ENCODE measurements at regions of chr3 and their contacts with region 1.

Region 1: GRCh38 chr3:119637679-119638525 is 22.5 kb downstream of the POPDC2 start:
- DNase-seq: no peak
- ATAC-seq: peak; percentile 54
- H3K4me3 Mint-ChIP-seq: peak overlapping the region; percentile 78
- H3K27ac Mint-ChIP-seq: peak overlapping the region; percentile 98
- H3K4me1 Mint-ChIP-seq: peaks cover 44% of the 10 kb centered on the region
- H3K27me3 Mint-ChIP-seq: no peaks in the 10 kb centered on the region
- CTCF ChIP-seq: no peak

Region 2: DNA sequence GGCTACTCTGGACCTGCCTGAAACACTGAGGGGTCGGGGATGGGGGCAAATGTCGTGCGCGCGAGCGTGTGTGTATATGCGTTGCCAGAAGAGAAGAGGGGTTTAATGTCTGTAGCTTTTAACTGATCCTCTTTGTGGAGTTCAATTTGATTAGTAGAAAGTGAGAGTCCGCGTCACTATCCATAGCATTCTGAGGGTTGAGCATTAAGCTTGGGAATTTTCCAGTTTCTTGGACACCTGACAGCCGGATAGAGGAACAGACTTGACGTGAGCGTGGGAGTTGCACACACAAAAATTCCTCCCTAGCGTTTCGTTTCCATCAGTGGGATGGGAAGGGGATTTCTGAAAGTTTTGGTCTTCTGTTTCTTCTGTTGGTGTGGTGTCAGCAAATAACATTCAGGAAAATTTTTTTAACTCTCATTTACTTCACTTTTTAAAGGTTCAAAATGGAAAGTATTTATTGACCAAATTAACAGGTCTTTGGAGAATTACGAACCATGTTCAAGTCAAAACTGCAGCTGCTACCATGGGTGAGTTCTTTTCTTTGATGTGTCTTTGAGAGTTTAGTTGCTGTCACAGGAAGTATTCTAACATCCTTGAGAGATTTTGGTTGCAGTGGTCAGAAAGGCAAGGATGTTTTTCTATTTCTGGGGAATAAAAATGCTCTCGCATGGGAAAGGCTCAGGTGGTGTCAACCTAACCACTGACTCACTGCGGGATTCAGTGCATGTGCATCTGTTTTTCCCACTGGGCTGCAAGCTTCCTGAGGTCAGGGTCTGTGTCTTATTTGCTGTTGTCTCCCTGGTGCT is 168.3 kb before region 1 on chr3:
- CTCF ChIA-PET with region 1: no interaction called
- POLR2A ChIA-PET with region 1: no interaction called
- intact Hi-C with region 1: loop called (anchors 1 kb)
- DNase-seq: no peak
- ATAC-seq: peak; percentile 45
- H3K4me3 Mint-ChIP-seq: peak overlapping the region; percentile 93
- H3K27ac Mint-ChIP-seq: peak overlapping the region; percentile 90
- H3K4me1 Mint-ChIP-seq: peaks cover 32% of the 10 kb centered on the region
- H3K27me3 Mint-ChIP-seq: no peaks in the 10 kb centered on the region
- CTCF ChIP-seq: no peak

Region 3: GRCh38 chr3:119542168-119542767 is 95.6 kb before region 1 on chr3:
- CTCF ChIA-PET with region 1: no interaction called
- POLR2A ChIA-PET with region 1: interaction called, 15 read pairs
- intact Hi-C with region 1: no loop called
- DNase-seq: no peak
- ATAC-seq: no peak
- H3K4me3 Mint-ChIP-seq: peak overlapping the region; percentile 33
- H3K27ac Mint-ChIP-seq: peak overlapping the region; percentile 77
- H3K4me1 Mint-ChIP-seq: peaks cover 79% of the 10 kb centered on the region
- H3K27me3 Mint-ChIP-seq: no peaks in the 10 kb centered on the region
- CTCF ChIP-seq: no peak

Region 4: GRCh38 chr3:119579366-119580165 is 58.3 kb before region 1 on chr3 and contains the start of gene ADPRH:
- CTCF ChIA-PET with region 1: no interaction called
- POLR2A ChIA-PET with region 1: interaction called, 16 read pairs
- intact Hi-C with region 1: loop called (anchors 1 kb)
- DNase-seq: peak; percentile 76
- ATAC-seq: peak; percentile 76
- H3K4me3 Mint-ChIP-seq: peak within 1 kb of the TSS; percentile 97
- H3K27ac Mint-ChIP-seq: peak within 1 kb of the TSS; percentile 99
- H3K4me1 Mint-ChIP-seq: peaks cover 37% of the 10 kb centered on the region
- H3K27me3 Mint-ChIP-seq: no peaks in the 10 kb centered on the region
- CTCF ChIP-seq: no peak
- total RNA-seq, gene ADPRH: 41.2 and 43.8 TPM in 2 replicates

Region 5: DNA sequence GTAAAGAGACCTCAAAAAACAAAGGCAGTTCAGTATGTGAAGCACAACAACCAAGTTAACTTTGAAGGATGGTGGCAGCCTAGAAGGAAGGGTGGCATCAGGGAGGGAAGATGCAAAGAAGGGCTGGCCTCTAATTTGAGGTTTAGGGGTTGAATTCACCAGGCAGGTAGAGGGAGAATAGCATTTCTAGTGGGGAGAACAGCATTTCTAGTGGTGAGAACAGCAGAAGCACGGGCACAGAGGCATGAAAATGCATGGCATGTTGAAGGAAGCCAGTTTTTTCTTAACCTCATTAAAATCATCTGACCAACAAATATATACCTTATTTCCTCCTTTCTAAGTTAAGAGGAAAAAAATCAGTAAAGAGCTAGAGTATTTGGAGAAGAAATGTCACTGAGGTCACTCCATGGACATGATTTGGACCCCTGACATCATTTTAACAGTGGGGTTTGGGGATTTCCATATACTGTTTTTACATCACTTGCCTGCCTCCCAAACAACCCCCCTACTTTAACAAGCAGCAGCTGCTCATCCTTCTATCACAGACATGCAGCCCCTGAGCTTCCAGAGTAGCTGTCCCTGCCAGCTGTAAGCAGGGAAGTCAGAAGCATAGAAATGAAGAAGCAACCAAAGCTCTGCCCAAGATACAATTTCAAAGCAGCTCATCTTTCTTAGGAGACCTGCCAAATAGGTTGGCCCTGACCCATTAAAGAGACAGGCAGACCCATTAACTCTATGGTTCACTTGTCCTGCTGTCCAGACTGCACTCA is 24.9 kb after region 1 on chr3:
- CTCF ChIA-PET with region 1: no interaction called
- POLR2A ChIA-PET with region 1: interaction called, 6 read pairs
- intact Hi-C with region 1: loop called (anchors 1 kb)
- DNase-seq: no peak
- ATAC-seq: no peak
- H3K4me3 Mint-ChIP-seq: no peak overlapping the region
- H3K27ac Mint-ChIP-seq: peak overlapping the region; percentile 67
- H3K4me1 Mint-ChIP-seq: peaks cover 68% of the 10 kb centered on the region
- H3K27me3 Mint-ChIP-seq: no peaks in the 10 kb centered on the region
- CTCF ChIP-seq: no peak

Region 6: DNA sequence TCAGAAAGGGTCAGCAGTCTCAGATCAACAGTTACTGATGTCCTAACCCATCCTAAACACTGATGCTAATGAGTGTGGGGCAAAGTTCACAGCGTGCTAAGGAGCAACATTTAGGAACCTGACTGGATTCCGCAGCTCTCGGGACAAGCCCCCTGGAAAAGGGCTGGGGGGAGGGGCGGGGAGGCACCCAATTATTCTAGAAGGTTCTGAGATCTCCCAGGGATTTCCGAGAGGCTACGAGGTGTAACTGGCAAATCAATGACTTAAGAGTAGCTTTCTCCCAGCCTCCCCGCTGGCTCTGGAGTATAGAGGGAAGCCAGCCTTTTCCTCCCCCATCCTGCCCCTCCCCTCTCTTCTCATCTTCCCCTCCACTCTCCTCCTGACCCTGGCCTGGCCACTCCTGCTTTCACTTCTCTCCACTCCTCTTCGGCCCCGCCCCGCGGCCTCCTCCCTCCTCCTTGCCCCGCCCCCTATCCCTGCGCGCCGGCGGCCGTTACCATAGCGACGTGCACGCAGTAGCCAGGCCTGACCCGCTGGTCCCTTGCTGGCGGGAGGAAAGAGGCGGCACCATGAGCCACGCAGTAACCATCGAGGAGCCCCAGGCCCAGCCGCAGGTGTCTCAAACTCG is 64.7 kb after region 1 on chr3 and contains the start of gene CFAP91:
- CTCF ChIA-PET with region 1: no interaction called
- POLR2A ChIA-PET with region 1: no interaction called
- intact Hi-C with region 1: loop called (anchors 2 kb)
- DNase-seq: peak; percentile 86
- ATAC-seq: peak; percentile 92
- H3K4me3 Mint-ChIP-seq: peak within 1 kb of the TSS; percentile 86
- H3K27ac Mint-ChIP-seq: peak within 1 kb of the TSS; percentile 72
- H3K4me1 Mint-ChIP-seq: peaks cover 52% of the 10 kb centered on the region
- H3K27me3 Mint-ChIP-seq: no peaks in the 10 kb centered on the region
- CTCF ChIP-seq: no peak
- total RNA-seq, gene CFAP91: 8.5 and 12.9 TPM in 2 replicates

Measured in activated B cell treated with CpG ODN at 0.5 μM for 24 hours (primary cell).